PC-9 (cell line): ENCODE measurements at regions of chr12 and their contacts with region 1.

Region 1: GRCh38 chr12:124453419-124454351 is 113.7 kb downstream of the NCOR2 start:
- DNase-seq: peak; percentile 96 to 97
- H3K4me3 ChIP-seq: peak overlapping the region; percentile 35; the same call in 1 of the 2 replicates
- H3K27ac ChIP-seq: peak overlapping the region; percentile 75
- H3K4me1 ChIP-seq: peaks cover 32% of the 10 kb centered on the region
- H3K27me3 ChIP-seq: no peaks in the 10 kb centered on the region
- CTCF ChIP-seq: no peak

Region 2: DNA sequence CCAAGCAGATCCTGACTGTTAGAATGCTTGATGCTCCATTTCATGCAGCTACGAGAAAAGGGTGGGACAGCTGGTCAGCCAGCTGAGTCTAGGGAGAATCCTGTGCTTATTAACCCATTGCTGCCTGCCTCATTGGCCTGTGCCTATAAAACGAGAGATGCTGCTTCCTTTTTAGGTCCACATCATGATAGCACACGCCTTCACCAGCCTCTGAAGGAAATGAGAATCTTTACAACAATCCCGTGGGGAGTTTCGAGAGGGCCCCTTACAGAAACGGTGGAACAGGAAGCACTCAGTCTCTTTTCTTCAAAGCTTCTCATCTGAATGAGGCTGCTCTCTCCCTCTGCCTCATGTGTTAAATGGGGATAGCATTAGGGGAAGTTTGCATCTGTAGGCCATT is 306.1 kb before region 1 on chr12:
- CTCF ChIA-PET with region 1: no interaction called
- POLR2A ChIA-PET with region 1: no interaction called
- intact Hi-C with region 1: no loop called
- DNase-seq: no peak
- H3K4me3 ChIP-seq: no peak overlapping the region
- H3K27ac ChIP-seq: no peak overlapping the region
- H3K4me1 ChIP-seq: no peaks in the 10 kb centered on the region
- H3K27me3 ChIP-seq: peaks cover 74% of the 10 kb centered on the region
- CTCF ChIP-seq: no peak

Region 3: GRCh38 chr12:124369055-124369900 is 84.4 kb before region 1 on chr12:
- CTCF ChIA-PET with region 1: no interaction called
- POLR2A ChIA-PET with region 1: interaction called, 12 read pairs
- intact Hi-C with region 1: loop called (anchors 2 kb)
- DNase-seq: peak; percentile 92 to 100
- H3K4me3 ChIP-seq: peak overlapping the region; percentile 35; the same call in 1 of the 2 replicates
- H3K27ac ChIP-seq: peak overlapping the region; percentile 69
- H3K4me1 ChIP-seq: peaks cover 48% of the 10 kb centered on the region
- H3K27me3 ChIP-seq: no peaks in the 10 kb centered on the region
- CTCF ChIP-seq: 0 out of 2 replicates have a peak, but pooled peaks have one; percentile 32

Region 4: GRCh38 chr12:124441443-124442194 is 12.1 kb before region 1 on chr12:
- CTCF ChIA-PET with region 1: interaction called, 4 read pairs
- POLR2A ChIA-PET with region 1: no interaction called
- intact Hi-C with region 1: loop called (anchors 1 kb)
- DNase-seq: peak; percentile 82 to 89
- H3K4me3 ChIP-seq: peak overlapping the region; percentile 52
- H3K27ac ChIP-seq: peak overlapping the region; percentile 97
- H3K4me1 ChIP-seq: peaks cover 33% of the 10 kb centered on the region
- H3K27me3 ChIP-seq: no peaks in the 10 kb centered on the region
- CTCF ChIP-seq: no peak

Region 5: DNA sequence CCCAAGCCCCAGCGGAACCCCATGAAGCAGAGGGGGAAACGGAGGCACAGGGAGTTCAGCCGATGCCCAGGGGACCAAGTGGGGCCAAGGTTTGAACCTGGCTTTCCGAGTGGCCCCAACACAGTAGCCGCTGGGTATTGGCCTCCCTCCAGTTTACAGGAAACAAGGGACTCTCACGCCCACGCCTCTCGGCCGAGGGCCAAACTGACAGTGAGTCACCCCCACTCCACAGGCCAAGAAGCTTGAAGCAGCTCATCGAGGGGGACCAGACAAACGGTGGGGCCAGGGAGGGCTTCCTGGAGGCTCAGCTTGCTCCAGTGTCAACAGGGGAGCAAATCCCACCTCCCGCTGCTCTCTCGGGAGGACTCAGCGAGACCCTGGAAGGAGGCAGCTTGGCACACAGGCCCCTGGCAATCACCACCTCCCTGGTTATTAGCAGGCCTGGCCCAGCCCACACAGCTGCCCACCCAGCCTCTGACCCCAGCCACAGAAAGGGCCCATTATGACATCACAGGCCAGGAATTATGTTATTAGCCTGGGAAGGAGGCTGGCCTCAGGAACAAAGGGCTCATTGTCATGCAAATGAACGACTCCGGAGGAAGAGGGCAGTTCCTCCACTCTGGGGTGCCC is 59.1 kb after region 1 on chr12:
- CTCF ChIA-PET with region 1: interaction called, 3 read pairs
- POLR2A ChIA-PET with region 1: no interaction called
- intact Hi-C with region 1: loop called (anchors 1 kb)
- DNase-seq: peak; percentile 89 to 92
- H3K4me3 ChIP-seq: peak overlapping the region; percentile 39; the same call in 1 of the 2 replicates
- H3K27ac ChIP-seq: peak overlapping the region; percentile 77
- H3K4me1 ChIP-seq: peaks cover 79% of the 10 kb centered on the region
- H3K27me3 ChIP-seq: no peaks in the 10 kb centered on the region
- CTCF ChIP-seq: no peak